AG04449 (cell line): ENCODE measurements at regions of chr6 and their contacts with region 1.

Region 1: GRCh38 chr6:33248925-33249731 is 22.5 kb downstream of the VPS52 start:
- DNase-seq: peak; percentile 95
- H3K4me3 ChIP-seq: peak overlapping the region; percentile 81
- CTCF ChIP-seq: peak; percentile 29

Region 2: GRCh38 chr6:32933636-32934085 is 315.5 kb before region 1 on chr6:
- CTCF ChIA-PET with region 1: interaction called, 33 read pairs
- POLR2A ChIA-PET with region 1: no interaction called
- DNase-seq: no peak
- H3K4me3 ChIP-seq: no peak overlapping the region
- CTCF ChIP-seq: peak; percentile 73

Region 3: DNA sequence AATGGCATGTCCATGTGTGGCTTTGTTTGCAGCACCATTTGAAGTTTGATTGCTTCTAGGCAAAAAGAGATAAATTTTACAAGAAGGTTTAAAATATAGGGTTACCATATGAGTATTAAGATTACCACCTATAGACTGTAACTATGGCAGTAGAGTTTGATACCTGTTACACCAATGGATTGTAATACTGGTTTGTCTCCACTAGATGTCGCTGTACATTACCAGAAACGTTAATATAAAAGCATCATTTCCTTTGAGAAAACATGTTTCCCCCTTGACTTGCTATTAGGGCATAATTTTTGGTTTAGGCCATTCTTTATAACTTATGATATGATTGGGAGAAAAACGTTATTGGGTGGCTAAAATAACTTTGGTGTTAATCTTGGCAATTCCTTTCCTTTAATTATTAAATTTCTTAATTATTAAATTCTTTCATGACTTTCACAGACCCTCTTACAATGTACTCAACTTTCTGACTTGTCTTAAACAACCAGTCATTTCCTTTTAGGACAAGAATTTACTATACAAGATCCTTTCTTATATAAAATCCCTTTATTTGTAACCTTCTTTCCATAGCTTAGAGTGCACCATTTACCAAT is 130.5 kb before region 1 on chr6:
- CTCF ChIA-PET with region 1: interaction called, 61 read pairs
- POLR2A ChIA-PET with region 1: no interaction called
- DNase-seq: no peak
- H3K4me3 ChIP-seq: no peak overlapping the region
- CTCF ChIP-seq: peak; percentile 56

Region 4: DNA sequence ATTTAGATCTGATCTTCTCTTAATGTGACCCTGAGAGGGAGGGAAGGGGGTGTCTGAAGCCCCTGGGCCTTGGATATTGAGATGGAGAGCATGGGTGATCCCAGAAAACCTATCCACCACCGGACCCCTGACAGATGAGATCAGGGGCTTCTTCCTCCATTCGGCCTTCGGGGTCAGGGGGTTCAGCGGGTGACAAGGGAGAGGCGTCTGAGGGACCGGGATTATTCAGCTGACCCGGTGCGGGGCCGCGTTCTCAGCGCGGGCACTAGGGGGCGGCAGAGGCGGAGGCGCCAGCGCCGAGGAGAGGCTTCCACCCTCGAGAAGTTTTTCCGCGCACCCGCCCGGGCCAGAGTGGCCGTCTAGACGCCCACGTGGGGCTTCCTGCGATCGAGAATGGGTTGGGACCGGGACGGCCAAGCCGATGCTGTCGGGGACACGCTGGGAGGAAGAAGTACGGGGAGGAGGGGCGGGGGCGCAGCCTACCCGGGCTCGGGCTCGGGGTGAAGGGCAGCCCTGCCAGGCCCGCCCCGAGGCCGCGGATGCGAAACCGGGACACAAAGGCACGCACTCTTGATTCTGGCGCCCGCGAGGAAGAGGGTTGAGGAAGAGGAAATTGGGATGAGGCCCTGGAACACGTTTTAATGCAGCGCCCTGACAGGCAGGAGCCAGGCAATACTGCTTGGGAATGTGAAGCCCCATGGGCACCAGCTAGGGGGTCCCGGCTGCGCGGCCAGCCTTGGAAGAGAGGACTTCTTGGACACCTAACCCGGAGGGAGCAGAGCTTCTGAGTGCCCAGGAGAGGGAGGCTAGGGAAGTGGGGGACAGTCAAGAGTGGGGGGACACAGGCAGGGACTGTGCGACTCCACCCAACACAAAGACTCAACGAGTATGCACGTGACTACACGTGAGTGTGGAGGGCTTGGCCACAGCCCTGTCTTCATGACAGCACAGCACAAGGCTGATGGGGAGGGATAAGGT is 87.5 kb before region 1 on chr6:
- CTCF ChIA-PET with region 1: interaction called, 91 read pairs
- POLR2A ChIA-PET with region 1: no interaction called
- DNase-seq: no peak
- H3K4me3 ChIP-seq: peak overlapping the region; percentile 57
- CTCF ChIP-seq: peak; percentile 94

Region 5: GRCh38 chr6:33213166-33213988 is 35.8 kb before region 1 on chr6:
- CTCF ChIA-PET with region 1: interaction called, 36 read pairs
- POLR2A ChIA-PET with region 1: interaction called, 25 read pairs
- DNase-seq: no peak
- H3K4me3 ChIP-seq: peak overlapping the region; percentile 62
- CTCF ChIP-seq: no peak

Region 6: DNA sequence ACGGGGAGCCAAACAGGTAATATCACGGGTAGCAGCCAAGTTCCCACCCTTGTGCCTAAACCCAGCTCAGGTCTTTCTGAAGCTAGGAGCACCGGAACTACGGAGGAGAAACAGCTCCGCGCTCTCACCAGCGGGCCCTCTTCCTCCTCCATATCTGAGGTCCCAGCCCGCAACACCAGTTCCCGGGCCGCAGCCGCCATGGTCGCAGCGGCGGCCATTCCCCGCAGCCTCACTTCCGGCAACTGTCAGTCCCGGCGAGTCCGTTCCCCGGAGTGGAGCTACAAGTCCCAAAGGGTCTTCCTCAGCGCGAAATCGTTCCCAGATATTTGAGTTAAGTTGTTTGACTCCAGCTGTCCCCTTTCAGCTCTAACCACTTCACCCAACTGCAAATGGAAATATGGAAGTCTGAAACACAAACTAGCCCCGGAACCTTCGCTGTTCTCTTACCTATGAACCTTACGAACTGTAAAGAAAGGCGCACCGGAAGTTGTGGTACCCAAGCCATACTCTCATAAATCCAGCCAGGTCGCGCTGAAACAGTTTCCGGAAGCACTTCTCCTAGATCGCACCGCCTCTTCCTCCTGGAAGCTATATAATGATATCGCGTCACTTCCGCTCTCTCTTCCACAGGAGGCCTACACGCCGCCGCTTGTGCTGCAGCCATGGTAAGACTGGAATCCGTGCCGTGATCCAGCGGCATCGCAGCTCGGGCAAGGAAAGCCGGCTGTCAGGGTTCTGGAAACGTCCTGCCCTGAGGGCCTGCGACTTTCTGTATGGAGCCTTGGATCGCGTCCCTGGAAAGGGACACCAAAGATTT is 22.5 kb after region 1 on chr6 and contains the starts of genes RPS18 and VPS52:
- CTCF ChIA-PET with region 1: interaction called, 29 read pairs
- POLR2A ChIA-PET with region 1: interaction called, 37 read pairs
- DNase-seq: peak; percentile 96
- H3K4me3 ChIP-seq: peak within 1 kb of the TSS; percentile 93
- CTCF ChIP-seq: no peak